ENCODE measurements at regions of chr14 and their contacts with region 1.

Region 1: GRCh38 chr14:88492272-88493089 is 62.3 kb downstream of the PTPN21 start:
- DNase-seq: peak; percentile 77
- H3K4me3 Mint-ChIP-seq: no peak overlapping the region
- H3K27ac Mint-ChIP-seq: no peak overlapping the region
- H3K4me1 Mint-ChIP-seq: no peaks in the 10 kb centered on the region
- H3K27me3 Mint-ChIP-seq: no peaks in the 10 kb centered on the region

Region 2: DNA sequence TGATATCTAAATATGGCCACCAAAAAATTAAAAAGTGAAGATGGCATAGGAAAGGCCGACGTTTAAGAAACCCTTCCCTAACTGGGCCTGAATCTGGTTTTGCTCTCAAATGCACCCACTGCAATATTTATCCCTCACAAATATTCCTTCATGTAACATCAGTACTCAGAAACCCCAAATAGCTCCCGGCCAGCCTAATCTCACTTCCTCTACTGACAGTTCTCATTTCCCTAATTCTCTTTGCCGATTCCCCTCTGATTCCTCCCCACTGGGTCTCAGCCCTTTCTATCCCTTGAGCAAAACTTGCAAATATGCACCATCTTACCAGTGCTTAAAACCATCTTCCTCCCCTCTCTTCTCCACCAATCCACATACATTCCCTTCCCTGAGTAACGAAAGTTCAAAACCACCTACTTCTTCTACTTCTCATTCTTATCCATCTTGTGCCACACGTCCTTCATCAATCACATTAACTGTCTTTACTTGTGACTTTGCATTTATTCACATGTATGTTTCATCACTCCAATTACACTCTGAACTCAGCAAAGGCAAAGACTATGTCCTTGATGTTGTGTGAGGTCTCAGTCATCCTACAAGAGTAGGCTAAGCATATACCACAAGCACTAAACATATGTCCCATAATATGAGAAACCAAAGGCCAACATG is 192.5 kb before region 1 on chr14:
- CTCF ChIA-PET with region 1: no interaction called
- intact Hi-C with region 1: no loop called
- DNase-seq: no peak
- H3K4me3 Mint-ChIP-seq: no peak overlapping the region
- H3K27ac Mint-ChIP-seq: no peak overlapping the region
- H3K4me1 Mint-ChIP-seq: peaks cover 3% of the 10 kb centered on the region
- H3K27me3 Mint-ChIP-seq: peaks cover 19% of the 10 kb centered on the region

Region 3: DNA sequence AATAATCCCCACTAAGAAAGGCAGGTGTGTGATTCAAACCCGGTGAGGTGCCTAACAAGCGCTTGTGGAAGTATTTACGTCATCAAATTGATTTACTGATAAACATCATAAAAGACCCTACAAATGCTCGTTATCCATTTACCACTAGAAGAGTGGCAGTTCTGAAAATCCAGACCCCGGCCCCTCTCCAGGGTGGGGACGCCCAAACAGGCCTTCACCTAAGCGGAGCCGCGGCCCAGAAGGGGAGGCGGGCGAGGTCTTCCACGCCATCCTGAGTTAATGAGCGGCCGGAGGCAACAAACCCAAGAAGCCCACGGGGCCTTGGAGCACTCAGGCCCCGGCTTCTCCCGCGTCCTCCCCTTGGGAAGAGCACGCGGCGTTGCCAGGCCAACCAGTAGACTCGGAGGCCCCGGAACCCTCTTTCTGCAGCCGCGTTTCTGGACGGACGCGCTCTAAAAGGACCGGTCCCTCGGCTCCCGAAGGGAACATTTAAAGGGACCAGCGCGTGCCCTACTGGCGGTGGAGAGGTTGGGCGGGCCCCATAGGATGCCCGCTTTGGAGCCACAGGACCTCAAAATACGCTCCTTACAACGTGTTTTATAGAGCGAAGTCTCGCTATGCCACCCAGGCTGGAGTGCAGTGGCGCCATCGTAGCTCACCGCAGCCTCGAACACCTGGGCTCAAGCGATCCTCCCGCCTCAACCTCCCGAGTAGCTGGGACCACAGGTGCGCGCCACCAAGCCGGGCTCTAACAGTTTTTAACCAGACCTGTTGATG is 58.8 kb after region 1 on chr14:
- CTCF ChIA-PET with region 1: interaction called, 6 read pairs
- intact Hi-C with region 1: loop called (anchors 2 kb)
- DNase-seq: peak; percentile 67
- H3K4me3 Mint-ChIP-seq: peak overlapping the region; percentile 74
- H3K27ac Mint-ChIP-seq: no peak overlapping the region
- H3K4me1 Mint-ChIP-seq: peaks cover 14% of the 10 kb centered on the region
- H3K27me3 Mint-ChIP-seq: peaks cover 29% of the 10 kb centered on the region

Region 4: DNA sequence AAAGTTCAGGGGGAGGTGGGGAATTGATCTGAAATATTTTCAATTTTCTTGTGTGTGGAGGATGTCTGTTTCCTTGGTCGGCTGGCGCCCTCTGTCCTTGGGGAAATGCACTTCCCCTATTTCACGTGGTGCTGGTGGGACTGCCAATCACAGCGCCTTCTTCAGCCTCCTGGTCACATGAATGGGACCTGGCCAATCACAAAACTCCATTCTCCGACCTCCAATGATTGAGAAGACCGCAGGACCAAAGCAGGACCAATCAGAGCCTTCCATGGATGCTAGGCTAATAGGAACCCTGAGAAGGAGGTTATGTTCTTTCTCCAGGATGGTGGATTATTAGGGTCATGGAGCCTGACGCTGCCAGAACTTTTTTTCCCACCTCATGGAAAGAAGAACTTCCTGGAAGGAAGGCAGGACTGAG is 520.6 kb after region 1 on chr14:
- CTCF ChIA-PET with region 1: no interaction called
- intact Hi-C with region 1: loop called (anchors 2 kb)
- DNase-seq: peak; percentile 52
- H3K4me3 Mint-ChIP-seq: no peak overlapping the region
- H3K27ac Mint-ChIP-seq: no peak overlapping the region
- H3K4me1 Mint-ChIP-seq: peaks cover under 1% of the 10 kb centered on the region
- H3K27me3 Mint-ChIP-seq: peaks cover 7% of the 10 kb centered on the region

Measured in activated naive CD4-positive, alpha-beta T cell treated with anti-CD3 and anti-CD28 coated beads for 36 hours (primary cell).